ENCODE measurements at regions of chr5 and their contacts with region 1.

Region 1: GRCh38 chr5:178931846-178932760 is 8.9 kb upstream of the ZNF454 start:
- DNase-seq: no peak
- ATAC-seq: no peak
- H3K4me3 Mint-ChIP-seq: no peak overlapping the region
- H3K27ac Mint-ChIP-seq: no peak overlapping the region
- H3K4me1 Mint-ChIP-seq: no peaks in the 10 kb centered on the region
- H3K27me3 Mint-ChIP-seq: no peaks in the 10 kb centered on the region

Region 2: GRCh38 chr5:178595150-178595549 is 337.0 kb before region 1 on chr5:
- CTCF ChIA-PET with region 1: no interaction called
- POLR2A ChIA-PET with region 1: no interaction called
- intact Hi-C with region 1: no loop called
- DNase-seq: no peak
- ATAC-seq: no peak
- H3K4me3 Mint-ChIP-seq: no peak overlapping the region
- H3K27ac Mint-ChIP-seq: no peak overlapping the region
- H3K4me1 Mint-ChIP-seq: peaks cover 5% of the 10 kb centered on the region
- H3K27me3 Mint-ChIP-seq: peaks cover 14% of the 10 kb centered on the region

Region 3: DNA sequence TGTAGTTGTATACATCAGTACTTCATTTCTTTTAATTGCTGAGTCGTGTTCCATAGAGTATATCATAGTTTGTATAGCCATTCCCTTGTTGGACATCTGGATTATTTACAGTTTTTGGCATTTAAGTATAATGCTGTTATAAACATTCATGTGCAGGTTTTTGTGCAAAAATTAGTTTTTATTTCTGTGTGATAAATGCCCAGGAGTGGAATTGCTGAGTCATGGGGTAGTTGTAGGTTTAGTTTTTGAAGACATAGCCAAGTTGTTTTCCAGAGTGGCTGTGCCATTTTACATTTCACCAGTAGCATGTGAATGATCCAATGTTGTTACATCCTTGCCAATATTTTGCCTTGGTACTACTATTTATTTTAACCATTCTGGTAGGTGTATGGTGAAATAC is 59.8 kb before region 1 on chr5:
- CTCF ChIA-PET with region 1: no interaction called
- POLR2A ChIA-PET with region 1: no interaction called
- intact Hi-C with region 1: loop called in 1 of 2 experiments (anchors 5 kb)
- DNase-seq: no peak
- ATAC-seq: no peak
- H3K4me3 Mint-ChIP-seq: no peak overlapping the region
- H3K27ac Mint-ChIP-seq: no peak overlapping the region
- H3K4me1 Mint-ChIP-seq: peaks cover 5% of the 10 kb centered on the region
- H3K27me3 Mint-ChIP-seq: no peaks in the 10 kb centered on the region

Region 4: DNA sequence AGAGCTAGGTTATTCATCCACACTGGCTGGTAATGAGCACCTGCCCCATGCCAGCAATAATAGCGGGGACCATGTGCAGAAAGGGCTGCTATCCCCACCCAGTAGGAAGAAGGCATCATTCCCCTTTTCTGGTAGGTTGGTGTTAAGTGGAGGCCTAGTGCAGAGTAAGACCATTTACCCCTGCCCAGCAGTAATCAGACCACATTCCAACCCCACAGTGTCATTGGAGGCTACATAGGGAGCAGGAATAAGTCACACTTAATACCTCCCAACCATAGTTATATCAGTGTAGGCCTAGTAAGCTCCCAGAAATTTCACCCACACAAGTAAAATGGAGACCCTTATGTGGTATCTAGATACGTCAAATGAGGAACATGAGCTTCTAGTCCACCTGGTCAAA is 42.0 kb before region 1 on chr5:
- CTCF ChIA-PET with region 1: no interaction called
- POLR2A ChIA-PET with region 1: no interaction called
- intact Hi-C with region 1: loop called in 1 of 2 experiments (anchors 5 kb)
- DNase-seq: no peak
- ATAC-seq: no peak
- H3K4me3 Mint-ChIP-seq: no peak overlapping the region
- H3K27ac Mint-ChIP-seq: no peak overlapping the region
- H3K4me1 Mint-ChIP-seq: no peaks in the 10 kb centered on the region
- H3K27me3 Mint-ChIP-seq: no peaks in the 10 kb centered on the region

Region 5: DNA sequence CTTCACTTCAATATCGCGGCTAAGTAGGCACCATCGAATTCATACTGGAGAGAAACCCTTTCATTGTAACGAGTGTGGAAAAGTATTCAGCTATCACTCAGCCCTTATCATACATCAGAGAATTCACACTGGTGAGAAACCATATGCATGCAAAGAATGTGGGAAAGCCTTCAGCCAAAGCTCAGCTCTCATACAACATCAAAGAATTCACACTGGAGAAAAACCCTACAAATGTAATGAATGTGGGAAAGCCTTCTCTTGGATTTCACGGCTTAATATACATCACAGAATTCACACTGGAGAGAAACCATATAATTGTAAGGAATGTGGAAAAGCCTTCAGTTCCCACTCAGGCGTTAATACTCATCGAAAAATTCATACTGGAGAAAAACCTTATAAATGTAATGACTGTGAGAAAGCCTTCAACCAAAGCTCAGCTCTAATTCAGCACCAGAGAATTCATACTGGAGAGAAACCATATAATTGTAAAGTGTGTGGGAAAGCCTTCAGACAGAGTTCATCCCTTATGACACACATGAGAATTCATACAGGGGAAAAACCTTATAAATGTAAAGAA is 101.0 kb after region 1 on chr5:
- CTCF ChIA-PET with region 1: no interaction called
- POLR2A ChIA-PET with region 1: no interaction called
- intact Hi-C with region 1: loop called in 1 of 2 experiments (anchors 2 kb)
- DNase-seq: no peak
- ATAC-seq: no peak
- H3K4me3 Mint-ChIP-seq: no peak overlapping the region
- H3K27ac Mint-ChIP-seq: no peak overlapping the region
- H3K4me1 Mint-ChIP-seq: no peaks in the 10 kb centered on the region
- H3K27me3 Mint-ChIP-seq: no peaks in the 10 kb centered on the region

Region 6: GRCh38 chr5:179154991-179155955 is 223.2 kb after region 1 on chr5:
- CTCF ChIA-PET with region 1: no interaction called
- POLR2A ChIA-PET with region 1: no interaction called
- intact Hi-C with region 1: no loop called
- DNase-seq: peak; percentile 38
- ATAC-seq: peak; percentile 49
- H3K4me3 Mint-ChIP-seq: no peak overlapping the region
- H3K27ac Mint-ChIP-seq: no peak overlapping the region
- H3K4me1 Mint-ChIP-seq: no peaks in the 10 kb centered on the region
- H3K27me3 Mint-ChIP-seq: no peaks in the 10 kb centered on the region

Measured in activated CD4-positive, alpha-beta T cell treated with anti-CD3 and anti-CD28 coated beads for 36 hours (primary cell).